Naive thymus-derived CD4-positive, alpha-beta T cell (primary cell): ENCODE measurements at regions of chr9 and their contacts with region 1.

Region 1: DNA sequence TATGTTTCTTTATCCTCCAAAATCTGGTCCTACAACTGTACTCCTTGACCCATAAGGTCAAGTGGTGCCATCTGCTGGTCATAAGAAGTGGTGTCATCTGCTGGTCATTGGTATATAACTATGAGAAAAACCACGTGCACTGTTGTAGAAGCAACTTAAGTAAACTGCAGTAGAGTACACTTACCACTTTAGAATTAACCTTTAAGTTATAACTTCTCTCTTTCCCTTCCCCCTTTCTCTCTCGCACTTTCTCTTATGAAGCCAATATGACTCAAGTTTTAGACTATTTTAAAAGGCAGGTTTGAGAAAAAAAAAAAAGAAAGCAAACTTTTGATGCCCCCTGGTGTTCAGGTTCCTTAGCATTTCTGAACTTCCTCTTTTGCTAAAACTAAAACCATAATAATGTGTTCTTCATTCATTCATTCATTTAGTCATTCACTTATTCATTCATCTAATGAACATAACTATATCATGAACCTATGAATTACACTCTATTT is 12.8 kb upstream of the MTAP start:
- DNase-seq: peak in 7 of 9 donors; percentile 60 to 80 (median 72)
- ATAC-seq: peak; percentile 98
- H3K4me3 ChIP-seq: peak overlapping the region; percentile 18
- H3K4me3 Mint-ChIP-seq: peak overlapping the region in 9 of 10 donors; percentile 55 to 85 (median 73)
- H3K27ac ChIP-seq: no peak overlapping the region
- H3K27ac Mint-ChIP-seq: peak overlapping the region in 4 of 9 donors; percentile 11 to 63 (median 36)
- H3K4me1 ChIP-seq: no peaks in the 10 kb centered on the region
- H3K4me1 Mint-ChIP-seq: peaks cover 0 to 7% (median 0%) of the 10 kb centered on the region in 7 donors
- H3K27me3 ChIP-seq: no peaks in the 10 kb centered on the region
- H3K27me3 Mint-ChIP-seq: peaks cover 0 to 45% (median 0%) of the 10 kb centered on the region in 5 donors

Region 2: DNA sequence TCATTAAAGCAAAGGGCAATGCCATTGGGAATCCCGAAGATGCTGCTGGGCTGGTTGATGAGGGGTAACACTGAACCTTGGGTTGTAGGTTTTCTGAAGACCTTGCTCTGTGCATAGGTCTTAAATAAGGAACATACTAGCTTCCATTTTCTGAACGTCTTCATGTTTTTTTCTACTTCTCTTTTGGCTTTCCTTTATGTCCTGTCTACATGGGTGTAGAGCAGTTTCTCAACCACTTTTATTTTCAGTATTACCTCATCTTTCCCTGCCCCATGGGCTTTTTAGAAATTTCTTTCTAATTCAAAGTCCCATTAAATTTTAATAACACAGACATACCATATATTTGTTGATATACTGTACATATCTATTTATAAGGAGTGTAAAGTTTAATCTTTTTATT is 549.7 kb before region 1 on chr9 and contains the start of gene IFNA14:
- CTCF ChIA-PET with region 1: interaction called, 6 read pairs
- POLR2A ChIA-PET with region 1: no interaction called
- intact Hi-C with region 1: loop called (anchors 1 kb)
- DNase-seq: no peak
- ATAC-seq: no peak
- H3K4me3 ChIP-seq: no peak within 1 kb of the TSS
- H3K4me3 Mint-ChIP-seq: no peak within 1 kb of the TSS
- H3K27ac ChIP-seq: no peak within 1 kb of the TSS
- H3K27ac Mint-ChIP-seq: no peak within 1 kb of the TSS
- H3K4me1 ChIP-seq: peaks cover 0 to 5% of the 10 kb centered on the region in 2 donors
- H3K4me1 Mint-ChIP-seq: peaks cover 6 to 19% (median 12%) of the 10 kb centered on the region in 7 donors
- H3K27me3 ChIP-seq: peaks cover 0 to 2% of the 10 kb centered on the region in 2 donors
- H3K27me3 Mint-ChIP-seq: peaks cover 14 to 53% (median 15%) of the 10 kb centered on the region in 5 donors
- total RNA-seq, gene IFNA14: not detected

Region 3: GRCh38 chr9:21326526-21327139 is 463.0 kb before region 1 on chr9:
- CTCF ChIA-PET with region 1: interaction called, 4 read pairs
- POLR2A ChIA-PET with region 1: no interaction called
- intact Hi-C with region 1: loop called (anchors 1 kb)
- DNase-seq: peak in 7 of 9 donors; percentile 31 to 67 (median 56)
- ATAC-seq: peak; percentile 95
- H3K4me3 ChIP-seq: no peak overlapping the region
- H3K4me3 Mint-ChIP-seq: peak overlapping the region in 4 of 10 donors; percentile 17 to 62 (median 40)
- H3K27ac ChIP-seq: no peak overlapping the region
- H3K27ac Mint-ChIP-seq: peak overlapping the region in 3 of 9 donors; percentile 17 to 73 (median 35)
- H3K4me1 ChIP-seq: peaks cover 10 to 23% of the 10 kb centered on the region in 2 donors
- H3K4me1 Mint-ChIP-seq: peaks cover 32 to 67% (median 55%) of the 10 kb centered on the region in 7 donors
- H3K27me3 ChIP-seq: no peaks in the 10 kb centered on the region
- H3K27me3 Mint-ChIP-seq: no peaks in the 10 kb centered on the region

Region 4: GRCh38 chr9:21491742-21492141 is 297.8 kb before region 1 on chr9:
- CTCF ChIA-PET with region 1: interaction called, 10 read pairs
- POLR2A ChIA-PET with region 1: no interaction called
- intact Hi-C with region 1: loop called (anchors 1 kb)
- DNase-seq: no peak
- ATAC-seq: no peak
- H3K4me3 ChIP-seq: no peak overlapping the region
- H3K4me3 Mint-ChIP-seq: no peak overlapping the region
- H3K27ac ChIP-seq: no peak overlapping the region
- H3K27ac Mint-ChIP-seq: no peak overlapping the region
- H3K4me1 ChIP-seq: no peaks in the 10 kb centered on the region
- H3K4me1 Mint-ChIP-seq: peaks cover 0 to 10% (median 0%) of the 10 kb centered on the region in 7 donors
- H3K27me3 ChIP-seq: no peaks in the 10 kb centered on the region
- H3K27me3 Mint-ChIP-seq: peaks cover 0 to 16% (median 3%) of the 10 kb centered on the region in 5 donors

Region 5: DNA sequence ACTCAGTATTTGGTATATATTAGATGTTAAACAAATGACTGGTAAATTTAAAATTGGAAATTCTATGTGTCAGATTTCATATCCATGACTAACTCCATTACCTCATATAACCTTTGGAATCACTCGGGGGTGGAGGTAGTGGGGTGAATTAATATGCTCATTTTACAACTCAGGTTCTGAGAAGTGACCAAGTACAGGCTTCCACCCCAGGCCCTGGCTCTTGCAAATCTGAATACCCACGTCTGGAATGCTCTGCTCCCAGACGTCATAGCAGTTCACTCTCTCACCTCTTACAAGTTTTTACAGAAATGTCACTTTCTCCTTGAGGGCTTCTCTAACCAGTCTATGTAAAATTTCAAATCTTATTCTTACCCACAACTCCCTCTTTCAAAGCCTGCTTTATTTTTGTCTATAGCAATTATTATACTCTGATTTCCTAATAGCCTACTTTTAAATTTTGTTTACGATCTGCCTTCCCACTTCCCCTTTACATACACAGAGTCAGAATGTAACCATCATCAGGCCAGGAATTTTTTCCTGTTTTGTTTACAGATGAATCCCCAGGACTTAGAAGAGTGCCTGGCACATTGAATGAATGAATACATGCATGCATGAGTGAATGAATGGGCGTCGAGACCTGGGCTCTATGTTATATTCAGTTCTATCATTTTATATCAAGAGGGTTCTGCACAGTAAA is 173.4 kb before region 1 on chr9:
- CTCF ChIA-PET with region 1: no interaction called
- POLR2A ChIA-PET with region 1: interaction called, 5 read pairs
- intact Hi-C with region 1: loop called in 1 of 2 experiments (anchors 5 kb)
- DNase-seq: no peak
- ATAC-seq: no peak
- H3K4me3 ChIP-seq: no peak overlapping the region
- H3K4me3 Mint-ChIP-seq: peak overlapping the region in 2 of 10 donors; percentile 16 to 31
- H3K27ac ChIP-seq: no peak overlapping the region
- H3K27ac Mint-ChIP-seq: no peak overlapping the region
- H3K4me1 ChIP-seq: peaks cover 20 to 39% of the 10 kb centered on the region in 2 donors
- H3K4me1 Mint-ChIP-seq: peaks cover 10 to 53% (median 39%) of the 10 kb centered on the region in 7 donors
- H3K27me3 ChIP-seq: no peaks in the 10 kb centered on the region
- H3K27me3 Mint-ChIP-seq: peaks cover 0 to 4% (median 0%) of the 10 kb centered on the region in 5 donors

Region 6: DNA sequence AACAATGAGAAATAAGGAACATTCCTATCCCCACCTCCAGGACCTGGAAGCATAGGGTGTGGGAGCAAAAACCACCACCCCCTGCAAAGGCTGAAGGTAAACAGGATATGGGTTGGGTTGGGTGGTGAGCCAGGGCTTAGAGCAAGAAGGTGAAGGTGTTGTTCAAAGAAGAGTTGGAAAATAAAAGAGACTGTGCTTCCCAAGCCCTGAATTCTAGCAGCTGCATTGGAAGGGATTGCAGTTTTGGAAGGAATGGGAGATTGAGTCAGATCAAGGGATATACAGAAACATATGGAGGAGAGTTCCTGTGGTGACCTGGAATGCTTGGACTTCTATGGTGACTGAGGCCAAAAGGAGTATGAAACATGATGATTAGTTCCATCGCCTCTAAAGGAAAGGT is 11.9 kb before region 1 on chr9:
- CTCF ChIA-PET with region 1: interaction called, 11 read pairs
- POLR2A ChIA-PET with region 1: interaction called, 4 read pairs
- intact Hi-C with region 1: no loop called
- DNase-seq: peak in 2 of 9 donors; percentile 11 to 24
- ATAC-seq: no peak
- H3K4me3 ChIP-seq: peak overlapping the region; percentile 12
- H3K4me3 Mint-ChIP-seq: no peak overlapping the region
- H3K27ac ChIP-seq: no peak overlapping the region
- H3K27ac Mint-ChIP-seq: no peak overlapping the region
- H3K4me1 ChIP-seq: peaks cover 10 to 34% of the 10 kb centered on the region in 2 donors
- H3K4me1 Mint-ChIP-seq: peaks cover 0 to 4% (median 0%) of the 10 kb centered on the region in 7 donors
- H3K27me3 ChIP-seq: no peaks in the 10 kb centered on the region
- H3K27me3 Mint-ChIP-seq: peaks cover 0 to 18% (median 0%) of the 10 kb centered on the region in 5 donors

Region 7: DNA sequence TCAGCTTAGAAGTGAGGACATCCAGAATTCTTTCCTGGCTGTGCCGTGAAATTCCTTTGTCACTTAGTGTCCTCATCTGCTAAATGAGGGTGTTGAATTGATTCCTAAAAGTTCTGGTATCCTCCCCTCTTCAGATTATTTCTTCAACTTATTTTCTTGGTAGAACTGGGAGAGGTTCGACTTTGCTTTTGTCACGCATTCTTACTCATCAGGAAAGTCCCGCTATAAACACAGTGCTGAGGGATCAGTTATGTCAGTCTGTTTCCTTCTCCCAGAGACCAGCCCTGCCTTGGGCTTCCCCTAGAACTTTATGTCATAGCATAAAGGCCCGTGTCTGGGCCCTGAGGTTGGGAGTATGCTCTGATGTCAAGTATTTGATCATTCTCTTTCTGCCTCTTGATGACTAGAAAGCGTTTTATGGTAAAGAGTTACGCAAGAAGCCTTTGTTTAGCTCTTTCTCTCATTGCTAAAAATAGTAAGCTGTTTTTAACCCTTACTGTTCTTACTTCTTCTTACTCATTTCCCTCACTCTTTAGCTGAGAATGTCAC is 42.4 kb after region 1 on chr9:
- CTCF ChIA-PET with region 1: no interaction called
- POLR2A ChIA-PET with region 1: no interaction called
- intact Hi-C with region 1: no loop called
- DNase-seq: peak in 1 of 9 donors; percentile 54
- ATAC-seq: peak; percentile 84
- H3K4me3 ChIP-seq: no peak overlapping the region
- H3K4me3 Mint-ChIP-seq: peak overlapping the region in 1 of 10 donors; percentile 16
- H3K27ac ChIP-seq: no peak overlapping the region
- H3K27ac Mint-ChIP-seq: peak overlapping the region in 2 of 9 donors; percentile 6 to 16
- H3K4me1 ChIP-seq: no peaks in the 10 kb centered on the region
- H3K4me1 Mint-ChIP-seq: peaks cover 0 to 53% (median 10%) of the 10 kb centered on the region in 7 donors
- H3K27me3 ChIP-seq: no peaks in the 10 kb centered on the region
- H3K27me3 Mint-ChIP-seq: no peaks in the 10 kb centered on the region